Activated T-helper 2 cell treated with anti-CD3 and anti-CD28 coated beads, Interferon-gamma antibody, Interleukin-2, Interleukin-4, amounts not matched to agents 10 μg/mL and 5 μg/mL and 100 μg/mL, durations not matched to agents 14 hours and 24 hours and 36 hours (primary cell): ENCODE measurements at regions of chr9 and their contacts with region 1.

Region 1: DNA sequence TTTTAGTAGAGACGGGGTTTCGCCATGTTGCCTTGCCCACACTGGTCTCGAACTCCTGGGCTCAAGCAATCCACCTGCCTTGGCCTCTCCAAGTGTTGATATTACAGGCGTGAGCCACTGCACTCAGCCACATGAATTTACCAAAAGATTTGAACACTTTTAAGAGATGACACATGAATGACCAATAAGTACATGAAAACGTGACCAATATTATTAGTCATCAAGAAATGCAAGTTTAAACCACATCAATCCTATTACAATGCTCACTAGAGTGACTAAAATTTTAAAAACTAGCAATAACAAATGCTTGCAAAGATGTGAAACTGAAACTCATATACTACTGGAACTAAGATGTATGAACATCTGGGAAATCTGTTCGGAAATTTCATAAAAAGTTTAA is 54.3 kb downstream of the NR6A1 start:
- DNase-seq: no peak
- H3K4me3 Mint-ChIP-seq: no peak overlapping the region
- H3K27ac Mint-ChIP-seq: no peak overlapping the region
- H3K4me1 Mint-ChIP-seq: peaks cover 10% of the 10 kb centered on the region
- H3K27me3 Mint-ChIP-seq: peaks cover 5% of the 10 kb centered on the region

Region 2: GRCh38 chr9:124551472-124552272 is 165.1 kb before region 1 on chr9:
- intact Hi-C with region 1: loop called (anchors 10 kb)
- DNase-seq: no peak
- H3K4me3 Mint-ChIP-seq: no peak overlapping the region
- H3K27ac Mint-ChIP-seq: no peak overlapping the region
- H3K4me1 Mint-ChIP-seq: no peaks in the 10 kb centered on the region
- H3K27me3 Mint-ChIP-seq: peaks cover 10% of the 10 kb centered on the region

Region 3: GRCh38 chr9:124735121-124735520 is 18.3 kb after region 1 on chr9:
- intact Hi-C with region 1: loop called (anchors 2 kb)
- DNase-seq: no peak
- H3K4me3 Mint-ChIP-seq: no peak overlapping the region
- H3K27ac Mint-ChIP-seq: peak overlapping the region; percentile 66
- H3K4me1 Mint-ChIP-seq: peaks cover 26% of the 10 kb centered on the region
- H3K27me3 Mint-ChIP-seq: peaks cover 4% of the 10 kb centered on the region